Kidney (tissue), 22 donors: ENCODE measurements at regions of chr12 and their contacts with region 1.

Region 1: DNA sequence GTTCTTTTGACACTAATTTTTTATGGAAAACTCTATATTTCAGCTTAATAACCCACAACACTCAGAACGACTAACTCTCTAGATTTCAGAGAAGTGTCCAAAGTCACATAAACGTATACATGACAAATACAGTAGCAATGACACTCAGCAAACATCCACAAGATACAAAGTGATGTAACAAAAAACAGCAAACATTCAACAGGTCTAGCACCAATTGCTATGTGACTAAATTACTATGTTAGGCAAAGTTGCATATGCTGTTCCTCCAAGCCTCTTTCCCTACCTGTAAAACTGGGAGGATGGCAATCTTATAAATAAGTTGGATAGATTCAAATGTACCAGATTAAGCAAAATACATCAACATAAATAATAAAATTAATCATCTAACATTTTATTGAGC is 1.7 kb downstream of the RECQL start:
- DNase-seq: no peak
- H3K4me3 ChIP-seq: peak overlapping the region in 1 of 3 donors; percentile 91
- H3K27ac ChIP-seq: no peak overlapping the region
- H3K4me1 ChIP-seq: peaks cover 0 to 13% (median 11%) of the 10 kb centered on the region in 3 donors
- H3K27me3 ChIP-seq: no peaks in the 10 kb centered on the region
- CTCF ChIP-seq: no peak

Region 2: DNA sequence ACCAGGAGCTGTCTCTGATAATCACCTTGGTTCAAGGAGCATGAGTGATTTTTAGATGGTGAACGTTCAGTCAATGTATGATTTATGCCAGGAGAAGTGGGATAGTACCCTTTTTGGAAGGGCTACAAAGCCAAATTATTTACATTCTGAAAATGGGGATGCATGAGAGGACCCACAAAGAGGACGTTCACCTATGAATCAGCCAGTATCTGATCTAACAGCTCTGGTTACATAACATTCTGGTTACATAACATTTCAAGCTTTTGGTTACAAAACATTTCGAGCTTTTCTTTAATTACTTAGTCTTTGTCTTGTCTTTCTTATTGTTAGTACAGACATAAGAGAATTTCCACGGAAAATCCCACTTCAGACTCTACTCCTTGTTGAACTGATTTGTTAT is 233.8 kb before region 1 on chr12:
- intact Hi-C with region 1: no loop called
- DNase-seq: no peak
- H3K4me3 ChIP-seq: no peak overlapping the region
- H3K27ac ChIP-seq: no peak overlapping the region
- H3K4me1 ChIP-seq: no peaks in the 10 kb centered on the region
- H3K27me3 ChIP-seq: no peaks in the 10 kb centered on the region
- CTCF ChIP-seq: no peak

Region 3: DNA sequence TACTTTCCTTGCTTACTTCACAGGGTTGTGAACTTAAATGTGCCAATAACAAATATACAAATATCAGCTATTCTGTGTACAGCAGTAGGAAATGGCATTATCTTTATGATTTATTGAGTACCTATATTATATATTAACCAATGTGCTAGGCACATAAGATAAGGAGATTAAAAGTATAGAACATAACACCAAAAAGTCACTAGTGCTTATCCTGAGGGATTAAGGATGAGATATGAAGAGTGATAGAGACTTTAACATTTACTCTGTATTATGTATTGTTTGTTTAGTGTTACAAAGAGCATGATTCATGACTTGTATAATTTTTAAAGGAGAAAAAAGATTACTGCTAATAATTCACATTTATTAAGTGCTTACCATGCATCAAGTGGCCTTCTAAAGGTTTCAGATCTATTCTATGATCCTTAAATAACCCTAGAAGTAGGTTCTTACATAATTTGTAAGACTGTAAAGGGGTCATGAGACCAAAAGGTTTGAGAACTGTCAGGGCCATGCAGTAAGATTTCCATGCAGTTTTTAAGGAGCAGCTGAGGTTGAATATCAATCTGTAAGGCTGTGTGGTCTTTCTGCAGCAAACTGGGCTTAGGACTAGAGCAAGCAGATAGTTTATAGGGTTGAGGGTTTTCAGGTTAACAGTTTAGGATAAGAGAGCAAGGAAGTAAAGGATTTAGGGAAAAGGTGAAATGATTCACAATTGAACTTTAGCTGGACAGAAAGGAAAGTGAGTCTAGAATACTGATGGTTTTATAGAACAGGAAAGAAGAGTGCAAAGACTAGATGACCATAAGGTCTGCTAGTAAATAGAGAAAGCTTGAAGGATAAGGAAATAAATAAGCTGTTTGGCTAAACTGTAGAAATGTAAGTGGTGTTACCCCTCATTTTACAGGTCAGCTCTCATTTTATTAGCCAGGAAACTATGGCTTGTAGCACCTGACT is 55.3 kb before region 1 on chr12:
- intact Hi-C with region 1: loop called (anchors 10 kb)
- DNase-seq: no peak
- H3K4me3 ChIP-seq: no peak overlapping the region
- H3K27ac ChIP-seq: no peak overlapping the region
- H3K4me1 ChIP-seq: no peaks in the 10 kb centered on the region
- H3K27me3 ChIP-seq: no peaks in the 10 kb centered on the region
- CTCF ChIP-seq: no peak